ENCODE measurements at regions of chr3 and their contacts with region 1.

Region 1: GRCh38 chr3:140974900-140975299 is 33.3 kb downstream of the SLC25A36 start:
- DNase-seq: no peak
- H3K4me3 Mint-ChIP-seq: no peak overlapping the region
- H3K27ac Mint-ChIP-seq: peak overlapping the region; percentile 76
- H3K4me1 Mint-ChIP-seq: peaks cover 15% of the 10 kb centered on the region
- H3K27me3 Mint-ChIP-seq: no peaks in the 10 kb centered on the region

Region 2: DNA sequence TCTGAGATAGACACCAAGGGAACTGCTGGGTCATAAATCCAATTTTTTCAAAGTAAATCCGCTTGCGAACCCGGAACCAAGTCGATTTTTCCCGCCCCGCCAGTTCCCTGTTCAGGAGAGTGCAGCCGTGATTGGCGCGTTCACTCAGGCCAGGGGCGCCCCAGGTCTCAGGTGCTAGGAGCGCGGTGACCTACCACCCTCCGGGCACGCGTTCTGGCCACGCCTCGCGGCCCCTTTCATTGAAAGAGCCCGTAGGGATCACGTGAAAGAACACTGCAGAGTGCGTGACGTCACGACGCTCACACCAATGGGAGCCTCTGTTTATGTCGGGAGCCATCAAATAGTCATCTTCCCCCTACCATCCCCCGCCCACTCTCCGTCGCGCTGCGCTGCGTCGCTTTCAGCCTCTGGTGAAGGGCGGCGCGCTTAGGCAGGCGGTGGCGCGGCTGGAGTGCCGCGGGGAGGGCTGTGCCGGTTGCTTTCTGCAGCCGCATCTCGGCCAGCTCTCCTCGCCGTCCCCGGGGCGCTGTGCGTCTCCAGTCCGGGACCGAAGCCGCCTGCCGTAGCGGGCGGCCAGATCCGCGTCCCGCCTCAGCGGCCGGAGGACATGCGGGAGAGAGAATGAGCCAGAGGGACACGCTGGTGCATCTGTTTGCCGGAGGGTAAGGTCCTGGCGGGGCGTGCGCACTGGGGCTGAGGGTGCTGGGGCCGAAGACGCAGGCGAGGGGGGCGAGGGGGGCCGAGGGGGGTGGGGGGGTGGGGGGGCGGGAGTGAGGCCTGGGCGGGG is 33.3 kb before region 1 on chr3 and contains the start of gene SLC25A36:
- intact Hi-C with region 1: loop called (anchors 5 kb)
- DNase-seq: peak; percentile 94
- H3K4me3 Mint-ChIP-seq: peak within 1 kb of the TSS; percentile 91
- H3K27ac Mint-ChIP-seq: peak within 1 kb of the TSS; percentile 96
- H3K4me1 Mint-ChIP-seq: peaks cover 34% of the 10 kb centered on the region
- H3K27me3 Mint-ChIP-seq: peaks cover 13% of the 10 kb centered on the region
- total RNA-seq, gene SLC25A36: 69.5 and 71.8 TPM in 2 replicates